Gastrocnemius medialis (tissue), 4 donors: ENCODE measurements at regions of chr18 and their contacts with region 1.

Region 1: DNA sequence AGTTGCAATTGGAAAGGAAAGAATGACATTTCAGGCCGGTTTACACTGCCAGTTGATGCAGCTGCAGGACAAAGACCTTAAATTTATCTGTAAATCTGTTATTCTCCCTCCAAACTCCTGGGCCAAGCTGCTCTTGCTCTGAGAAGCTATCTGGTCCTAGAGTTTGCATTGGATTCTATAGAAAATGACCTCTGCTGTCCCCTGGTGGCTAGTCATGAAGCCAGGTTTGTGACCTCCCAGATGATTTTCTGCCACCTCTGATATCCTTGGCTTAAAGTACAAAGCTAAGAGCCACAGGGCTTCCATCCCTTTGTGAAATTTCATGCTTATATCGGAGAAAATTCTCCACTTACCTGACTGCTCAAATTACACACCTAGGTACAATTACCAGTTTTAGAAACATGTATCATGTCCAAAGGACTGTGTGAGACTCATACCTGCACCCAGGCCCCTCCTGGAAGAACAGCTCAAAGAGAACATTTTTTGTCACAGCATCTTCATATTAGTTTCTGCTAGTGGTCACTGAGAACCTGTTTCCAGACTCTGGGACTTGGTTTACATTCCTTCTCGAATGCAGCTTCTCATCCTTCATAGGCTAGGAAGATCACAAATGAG is 28.9 kb upstream of the IER3IP1 start:
- DNase-seq: no peak
- ATAC-seq: peak; percentile 58 to 62
- H3K4me3 ChIP-seq: no peak overlapping the region
- H3K27ac ChIP-seq: no peak overlapping the region
- H3K4me1 ChIP-seq: no peaks in the 10 kb centered on the region
- H3K27me3 ChIP-seq: no peaks in the 10 kb centered on the region
- CTCF ChIP-seq: peak; percentile 68 to 84 (median 79)
- POLR2A ChIP-seq: no peak

Region 2: DNA sequence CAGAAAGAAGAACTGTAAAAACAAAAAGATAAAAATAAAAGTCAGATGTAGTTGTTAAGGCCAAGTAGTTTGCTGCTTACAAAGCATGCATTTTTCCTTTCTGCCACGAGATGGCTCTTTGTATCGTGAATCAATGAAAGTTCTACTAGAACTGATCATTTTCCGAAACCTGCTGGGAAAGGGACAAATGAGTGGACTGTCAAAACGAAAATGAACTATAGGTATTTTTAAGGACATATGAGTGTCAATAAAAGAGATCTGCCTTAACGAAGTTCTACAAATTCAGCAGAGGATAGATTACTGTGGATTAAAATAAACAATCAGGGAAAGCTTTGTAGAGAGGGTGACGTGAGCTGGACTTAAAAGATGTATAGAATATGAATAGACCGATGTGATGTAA is 154.5 kb before region 1 on chr18:
- in situ Hi-C with region 1: no loop called
- intact Hi-C with region 1: loop called (anchors 1 kb)
- DNase-seq: no peak
- ATAC-seq: no peak
- H3K4me3 ChIP-seq: no peak overlapping the region
- H3K27ac ChIP-seq: no peak overlapping the region
- H3K4me1 ChIP-seq: peaks cover 0 to 11% of the 10 kb centered on the region in 2 donors
- H3K27me3 ChIP-seq: no peaks in the 10 kb centered on the region
- CTCF ChIP-seq: peak; percentile 21 to 62 (median 54)
- POLR2A ChIP-seq: no peak

Region 3: DNA sequence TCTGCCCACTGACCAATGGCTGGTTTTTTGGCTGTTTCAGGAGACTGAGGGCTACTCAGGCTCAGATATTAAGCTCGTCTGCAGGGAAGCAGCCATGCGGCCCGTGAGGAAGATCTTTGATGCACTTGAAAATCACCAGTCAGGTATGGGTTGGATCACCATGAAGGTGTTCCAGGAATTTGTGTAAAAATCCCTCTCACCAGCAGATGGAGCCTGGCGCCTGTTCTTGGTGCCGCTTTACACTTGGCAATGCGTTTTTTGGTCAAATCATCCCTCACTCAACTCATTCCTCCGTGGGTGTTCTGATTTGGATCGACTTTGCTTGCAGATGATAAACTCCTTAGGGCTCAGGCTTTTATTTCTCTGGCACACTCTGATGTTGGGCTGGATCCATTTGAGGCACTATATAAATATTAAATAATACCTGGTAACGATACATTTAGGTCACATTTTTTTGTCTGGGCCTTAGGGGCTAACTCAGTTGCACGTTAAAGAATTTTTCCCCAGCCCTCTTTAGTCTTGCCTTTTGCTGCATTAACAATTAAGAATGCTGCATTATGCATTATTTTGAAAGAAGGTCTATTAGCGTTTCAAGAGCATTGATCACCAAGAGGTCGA is 104.7 kb before region 1 on chr18:
- in situ Hi-C with region 1: loop called (anchors 5 to 10 kb)
- intact Hi-C with region 1: loop called (anchors 1 kb)
- DNase-seq: no peak
- ATAC-seq: peak; percentile 30 to 51
- H3K4me3 ChIP-seq: no peak overlapping the region
- H3K27ac ChIP-seq: no peak overlapping the region
- H3K4me1 ChIP-seq: no peaks in the 10 kb centered on the region
- H3K27me3 ChIP-seq: no peaks in the 10 kb centered on the region
- CTCF ChIP-seq: peak; percentile 54 to 76 (median 66)
- POLR2A ChIP-seq: no peak

Region 4: GRCh38 chr18:47191961-47192360 is 13.1 kb before region 1 on chr18:
- in situ Hi-C with region 1: no loop called
- intact Hi-C with region 1: no loop called
- DNase-seq: no peak
- ATAC-seq: no peak
- H3K4me3 ChIP-seq: no peak overlapping the region
- H3K27ac ChIP-seq: no peak overlapping the region
- H3K4me1 ChIP-seq: no peaks in the 10 kb centered on the region
- H3K27me3 ChIP-seq: peaks cover 0 to 6% (median 0%) of the 10 kb centered on the region in 3 donors
- CTCF ChIP-seq: no peak
- POLR2A ChIP-seq: no peak